Endothelial cell of umbilical vein (primary cell): ENCODE measurements at regions of chr11 and their contacts with region 1.

Region 1: DNA sequence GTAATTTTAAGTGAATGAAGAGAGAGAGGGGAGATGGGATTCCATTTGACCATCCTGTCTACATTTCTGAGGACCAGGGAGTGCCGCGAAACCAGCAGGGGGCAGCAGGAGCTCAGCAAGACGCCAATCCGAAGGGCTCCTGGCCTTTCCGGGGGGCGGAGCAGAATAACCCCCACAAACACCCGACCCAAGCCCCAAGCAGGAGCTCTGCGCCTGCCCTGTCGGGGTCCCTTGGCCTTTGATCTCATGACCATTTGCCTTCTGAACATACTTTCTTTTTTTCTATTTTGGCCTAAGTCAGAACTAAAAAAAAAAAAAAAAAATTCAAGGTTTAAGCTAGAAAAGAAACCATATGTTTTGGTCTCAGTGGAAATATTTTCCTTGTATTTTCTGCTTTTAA is 21.9 kb upstream of the SCN2B start:
- DNase-seq: peak; percentile 61
- H3K4me3 ChIP-seq: no peak overlapping the region
- H3K27ac ChIP-seq: no peak overlapping the region
- H3K4me1 ChIP-seq: no peaks in the 10 kb centered on the region
- H3K27me3 ChIP-seq: peaks cover 0 to 4% of the 10 kb centered on the region in 2 experiments
- CTCF ChIP-seq: peak; percentile 81 to 93
- POLR2A ChIP-seq: no peak

Region 2: DNA sequence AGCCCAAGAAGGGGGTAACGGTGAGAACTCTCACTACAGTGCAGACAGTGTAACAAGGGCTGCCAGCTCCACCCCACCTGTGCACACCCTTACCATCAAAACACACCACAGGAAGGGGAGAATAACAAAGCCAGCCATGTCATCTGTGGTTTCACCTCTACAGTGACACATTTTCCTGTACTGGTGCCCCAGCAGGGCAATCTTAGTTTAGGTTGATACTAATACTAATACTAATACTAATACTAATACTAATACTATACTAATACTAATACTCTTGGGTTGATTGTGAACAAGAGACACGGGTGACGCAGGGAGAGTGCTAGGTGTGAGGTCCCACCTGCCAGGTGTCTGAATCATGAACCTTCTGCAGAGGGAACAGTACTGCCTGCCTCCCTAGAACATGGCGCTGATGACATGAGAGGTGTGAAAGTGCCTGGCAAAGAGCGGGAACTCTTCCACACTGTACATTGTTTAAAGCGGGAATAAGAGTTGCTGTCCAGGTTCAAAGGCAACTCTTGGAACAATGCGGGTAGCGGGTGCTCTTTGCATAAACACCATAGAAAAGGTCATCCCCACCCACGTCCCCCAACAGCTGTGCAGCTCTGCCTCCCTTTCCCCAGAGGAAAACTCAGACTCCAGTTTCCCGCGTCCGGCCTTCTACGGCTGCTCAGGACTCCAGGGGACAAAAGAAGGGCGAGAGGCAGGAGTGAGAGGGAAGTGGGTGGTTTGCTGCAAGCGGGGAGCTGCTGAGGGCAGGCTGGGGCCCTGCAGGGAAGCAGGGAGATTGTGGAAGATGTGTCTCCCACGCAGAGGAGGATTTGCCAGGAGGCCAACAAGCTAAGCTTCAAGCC is 146.5 kb before region 1 on chr11:
- CTCF ChIA-PET with region 1: no interaction called
- POLR2A ChIA-PET with region 1: no interaction called
- dilution Hi-C with region 1: no loop called
- intact Hi-C with region 1: no loop called
- DNase-seq: no peak
- H3K4me3 ChIP-seq: no peak overlapping the region
- H3K27ac ChIP-seq: no peak overlapping the region
- H3K4me1 ChIP-seq: no peaks in the 10 kb centered on the region
- H3K27me3 ChIP-seq: peaks cover 5 to 7% of the 10 kb centered on the region in 2 experiments
- CTCF ChIP-seq: no peak
- POLR2A ChIP-seq: no peak

Region 3: GRCh38 chr11:118171269-118172062 is 26.9 kb before region 1 on chr11:
- CTCF ChIA-PET with region 1: interaction called, 20 read pairs
- POLR2A ChIA-PET with region 1: no interaction called
- dilution Hi-C with region 1: no loop called
- intact Hi-C with region 1: no loop called
- DNase-seq: peak; percentile 61
- H3K4me3 ChIP-seq: no peak overlapping the region
- H3K27ac ChIP-seq: no peak overlapping the region
- H3K4me1 ChIP-seq: no peaks in the 10 kb centered on the region
- H3K27me3 ChIP-seq: peaks cover 15 to 31% of the 10 kb centered on the region in 2 experiments
- CTCF ChIP-seq: peak; percentile 75 to 91
- POLR2A ChIP-seq: no peak

Region 4: DNA sequence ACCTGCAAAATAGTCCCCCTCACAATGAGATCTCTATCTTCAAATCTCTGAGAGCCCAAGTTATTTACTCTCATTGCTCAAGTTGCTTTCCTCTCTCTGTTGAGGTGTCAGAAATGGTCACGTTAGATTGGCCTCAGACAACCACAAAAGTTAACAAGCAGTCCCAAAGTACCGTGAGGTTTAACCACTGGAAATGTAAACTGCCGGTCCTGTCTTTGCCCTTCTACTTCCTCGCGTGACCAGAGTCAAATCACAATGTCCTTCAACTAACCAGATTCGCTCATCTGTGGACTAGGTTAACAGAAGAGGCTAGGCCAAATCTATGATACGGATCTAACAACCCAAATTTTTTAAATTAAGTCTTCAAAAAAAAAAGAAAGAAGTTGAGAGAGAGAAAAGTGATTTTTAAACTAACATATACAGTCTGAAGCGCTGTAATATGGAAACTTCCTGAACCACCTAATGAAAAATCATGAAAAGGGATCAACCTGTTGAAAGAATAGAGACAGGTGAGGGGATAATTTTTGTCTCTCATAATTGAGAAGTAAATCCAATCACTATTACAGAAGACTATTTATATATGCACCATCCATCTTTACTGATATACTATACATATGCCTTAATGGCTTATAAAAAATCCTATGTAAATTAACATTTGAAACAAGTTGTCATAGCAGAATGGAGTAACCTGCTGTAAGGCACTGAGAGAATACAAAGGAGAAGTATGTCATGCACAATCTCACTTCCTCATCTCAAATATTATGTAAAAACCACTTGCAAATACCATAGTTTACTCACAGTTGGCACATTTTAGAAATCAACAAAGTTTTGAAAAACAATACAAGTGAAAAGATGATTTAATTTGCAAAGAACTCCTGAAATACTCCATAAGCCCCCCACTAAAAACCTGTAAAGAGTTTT is 29.8 kb after region 1 on chr11:
- CTCF ChIA-PET with region 1: interaction called, 35 read pairs
- POLR2A ChIA-PET with region 1: no interaction called
- dilution Hi-C with region 1: no loop called
- intact Hi-C with region 1: loop called (anchors 1 kb)
- DNase-seq: peak; percentile 43
- H3K4me3 ChIP-seq: no peak overlapping the region
- H3K27ac ChIP-seq: peak overlapping the region; percentile 34
- H3K4me1 ChIP-seq: peaks cover 27% of the 10 kb centered on the region
- H3K27me3 ChIP-seq: no peaks in the 10 kb centered on the region
- CTCF ChIP-seq: no peak
- POLR2A ChIP-seq: no peak

Region 5: DNA sequence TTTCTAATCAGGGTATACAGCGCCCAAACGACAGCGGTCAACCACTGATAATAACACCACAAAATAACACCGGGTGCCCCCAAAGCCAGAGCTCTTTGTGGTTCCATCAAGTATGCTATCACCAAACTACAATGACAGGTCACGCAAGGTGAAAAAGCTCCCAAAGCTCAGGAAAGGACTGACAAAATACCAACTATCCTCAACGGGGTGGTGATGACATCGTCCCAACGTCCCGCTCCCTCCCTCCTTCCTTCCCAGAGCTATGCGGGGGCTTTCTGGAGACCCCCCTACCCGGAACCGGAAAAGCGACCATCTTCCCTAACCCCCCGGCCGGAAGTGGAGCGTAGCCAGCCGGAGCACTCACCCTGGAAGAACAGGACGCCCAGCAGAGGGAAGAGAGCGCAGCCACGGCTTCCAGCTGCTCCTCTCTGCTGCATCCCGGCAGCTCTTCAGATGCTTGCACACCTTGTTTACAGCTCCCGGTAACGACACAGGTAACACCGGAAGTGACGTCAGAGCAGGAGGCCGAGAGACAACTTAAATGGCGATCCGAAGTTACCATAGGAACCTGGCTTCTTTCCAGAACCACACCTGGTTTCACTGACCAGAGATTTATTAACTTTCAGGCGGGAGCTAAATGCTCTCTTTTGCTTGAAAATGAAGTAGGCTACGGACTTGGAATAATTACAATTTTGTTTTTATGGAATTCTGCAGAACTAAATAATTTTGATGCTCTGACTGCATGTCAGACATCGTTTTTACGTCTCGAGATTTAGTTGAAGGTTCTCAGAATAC is 53.7 kb after region 1 on chr11 and contains the start of gene MPZL3:
- CTCF ChIA-PET with region 1: interaction called, 23 read pairs
- POLR2A ChIA-PET with region 1: no interaction called
- dilution Hi-C with region 1: no loop called
- intact Hi-C with region 1: no loop called
- DNase-seq: peak; percentile 78
- H3K4me3 ChIP-seq: peak within 1 kb of the TSS; percentile 40 to 95 (median 85)
- H3K27ac ChIP-seq: peak within 1 kb of the TSS; percentile 62
- H3K4me1 ChIP-seq: peaks cover 15% of the 10 kb centered on the region
- H3K27me3 ChIP-seq: no peaks in the 10 kb centered on the region
- CTCF ChIP-seq: no peak
- POLR2A ChIP-seq: peak; percentile 66
- total RNA-seq, gene MPZL3: 7.0 and 7.1 TPM in 2 replicates

Region 6: GRCh38 chr11:118290923-118291322 is 92.6 kb after region 1 on chr11:
- CTCF ChIA-PET with region 1: interaction called, 235 read pairs
- POLR2A ChIA-PET with region 1: no interaction called
- dilution Hi-C with region 1: no loop called
- intact Hi-C with region 1: loop called (anchors 1 kb)
- DNase-seq: peak; percentile 68
- H3K4me3 ChIP-seq: no peak overlapping the region
- H3K27ac ChIP-seq: no peak overlapping the region
- H3K4me1 ChIP-seq: no peaks in the 10 kb centered on the region
- H3K27me3 ChIP-seq: no peaks in the 10 kb centered on the region
- CTCF ChIP-seq: peak; percentile 30 to 53
- POLR2A ChIP-seq: no peak

Region 7: GRCh38 chr11:118311518-118311917 is 113.1 kb after region 1 on chr11:
- CTCF ChIA-PET with region 1: interaction called, 23 read pairs
- POLR2A ChIA-PET with region 1: no interaction called
- dilution Hi-C with region 1: no loop called
- intact Hi-C with region 1: no loop called
- DNase-seq: no peak
- H3K4me3 ChIP-seq: no peak overlapping the region
- H3K27ac ChIP-seq: no peak overlapping the region
- H3K4me1 ChIP-seq: no peaks in the 10 kb centered on the region
- H3K27me3 ChIP-seq: peaks cover 7 to 12% of the 10 kb centered on the region in 2 experiments
- CTCF ChIP-seq: no peak
- POLR2A ChIP-seq: no peak

Region 8: GRCh38 chr11:118488480-118489109 is 290.2 kb after region 1 on chr11:
- CTCF ChIA-PET with region 1: interaction called, 6 read pairs
- POLR2A ChIA-PET with region 1: no interaction called
- dilution Hi-C with region 1: no loop called
- intact Hi-C with region 1: loop called (anchors 1 kb)
- DNase-seq: peak; percentile 80
- H3K4me3 ChIP-seq: no peak overlapping the region
- H3K27ac ChIP-seq: no peak overlapping the region
- H3K4me1 ChIP-seq: no peaks in the 10 kb centered on the region
- H3K27me3 ChIP-seq: no peaks in the 10 kb centered on the region
- CTCF ChIP-seq: peak; percentile 74 to 76
- POLR2A ChIP-seq: no peak